ENCODE measurements at regions of chr6 and their contacts with region 1.

Region 1: DNA sequence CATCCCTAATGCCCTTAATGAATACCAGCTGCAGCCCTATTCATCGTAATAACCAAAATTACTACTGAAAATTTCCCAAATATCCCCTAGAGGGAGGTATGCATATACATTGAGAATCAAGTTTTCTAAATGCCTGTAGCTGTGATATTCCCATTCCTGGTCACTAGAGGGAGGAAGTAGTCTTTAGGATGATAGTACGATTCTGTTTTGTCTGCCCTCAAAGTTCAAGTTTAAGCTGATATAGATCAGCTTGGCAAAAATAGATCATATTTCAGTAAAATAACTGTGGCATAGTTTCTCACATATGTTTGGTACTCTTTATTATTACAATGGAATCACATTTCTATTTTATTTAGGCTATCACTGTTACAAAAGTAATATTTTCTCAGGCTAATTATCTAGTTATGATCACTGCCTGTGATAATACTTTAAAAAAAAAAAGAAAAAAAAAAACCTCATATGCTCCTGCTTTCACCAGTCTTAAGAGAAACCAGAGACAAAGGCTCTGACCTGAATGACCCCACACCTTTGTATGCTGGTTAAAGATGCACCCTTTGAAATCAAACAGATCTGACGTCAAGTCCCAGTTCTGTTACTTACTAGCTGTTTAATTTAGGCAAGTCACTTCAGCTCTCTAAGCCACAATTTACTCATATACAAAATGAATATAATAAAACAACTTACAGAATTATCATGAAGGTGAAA is 11.0 kb downstream of the TSPYL1 start:
- DNase-seq: no peak
- ATAC-seq: peak; percentile 81
- H3K4me3 Mint-ChIP-seq: no peak overlapping the region
- H3K27ac Mint-ChIP-seq: peak overlapping the region; percentile 61; the same call in 1 of the 2 replicates
- H3K4me1 Mint-ChIP-seq: peaks cover 30% of the 10 kb centered on the region
- H3K27me3 Mint-ChIP-seq: no peaks in the 10 kb centered on the region
- CTCF ChIP-seq: peak; percentile 76

Region 2: GRCh38 chr6:116229287-116229913 is 39.3 kb before region 1 on chr6:
- CTCF ChIA-PET with region 1: interaction called, 10 read pairs
- POLR2A ChIA-PET with region 1: no interaction called
- DNase-seq: peak; percentile 95
- ATAC-seq: peak; percentile 99
- H3K4me3 Mint-ChIP-seq: peak overlapping the region; percentile 57
- H3K27ac Mint-ChIP-seq: peak overlapping the region; percentile 95
- H3K4me1 Mint-ChIP-seq: peaks cover 10% of the 10 kb centered on the region
- H3K27me3 Mint-ChIP-seq: no peaks in the 10 kb centered on the region
- CTCF ChIP-seq: no peak

Region 3: DNA sequence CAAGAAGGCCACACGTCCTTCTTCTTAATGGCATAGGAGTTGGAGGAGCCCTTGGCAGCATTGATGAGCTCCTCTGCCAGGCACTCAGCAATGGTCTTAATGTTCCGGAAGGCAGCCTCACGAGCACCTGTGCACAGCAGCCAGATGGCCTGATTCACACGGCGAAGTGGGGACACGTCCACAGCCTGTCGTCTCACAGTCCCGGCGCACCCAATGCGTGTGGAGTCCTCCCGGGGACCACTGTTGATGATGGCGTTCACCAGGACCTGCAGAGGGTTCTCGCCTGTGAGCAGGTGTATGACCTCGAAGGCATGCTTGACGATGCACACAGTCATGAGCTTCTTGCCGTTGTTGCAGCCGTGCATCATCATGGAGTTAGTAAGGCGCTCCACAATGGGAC is 10.2 kb before region 1 on chr6:
- CTCF ChIA-PET with region 1: interaction called, 10 read pairs
- POLR2A ChIA-PET with region 1: interaction called, 4 read pairs
- DNase-seq: no peak
- ATAC-seq: no peak
- H3K4me3 Mint-ChIP-seq: no peak overlapping the region
- H3K27ac Mint-ChIP-seq: no peak overlapping the region
- H3K4me1 Mint-ChIP-seq: no peaks in the 10 kb centered on the region
- H3K27me3 Mint-ChIP-seq: peaks cover 5% of the 10 kb centered on the region; the same call in 1 of the 2 replicates
- CTCF ChIP-seq: no peak

Region 4: DNA sequence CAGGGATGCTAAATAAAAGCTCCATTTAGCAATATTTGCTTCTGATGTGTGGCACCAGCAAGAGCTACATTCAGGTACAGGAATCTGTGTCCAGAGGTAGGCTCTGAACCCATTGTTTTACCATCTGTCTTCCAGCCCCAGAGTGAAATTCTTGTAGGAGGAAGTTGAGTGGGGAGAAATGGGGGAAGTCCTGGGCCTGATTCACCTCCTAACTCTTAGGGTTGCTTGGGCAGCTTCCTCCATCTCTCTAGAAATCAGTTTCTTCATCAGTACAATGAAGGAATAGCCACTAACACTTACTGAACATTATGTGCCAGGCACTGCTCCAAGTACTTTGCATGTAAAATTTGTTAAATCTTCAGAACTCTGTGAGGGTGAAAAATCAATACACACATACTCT is 46.1 kb after region 1 on chr6:
- CTCF ChIA-PET with region 1: no interaction called
- POLR2A ChIA-PET with region 1: no interaction called
- DNase-seq: no peak
- ATAC-seq: 0 out of 2 replicates have a peak, but pooled peaks have one; percentile 28
- H3K4me3 Mint-ChIP-seq: no peak overlapping the region
- H3K27ac Mint-ChIP-seq: no peak overlapping the region
- H3K4me1 Mint-ChIP-seq: 0 out of 2 replicates have a peak, but pooled peaks cover 4% of the 10 kb centered on the region
- H3K27me3 Mint-ChIP-seq: no peaks in the 10 kb centered on the region
- CTCF ChIP-seq: no peak

Region 5: DNA sequence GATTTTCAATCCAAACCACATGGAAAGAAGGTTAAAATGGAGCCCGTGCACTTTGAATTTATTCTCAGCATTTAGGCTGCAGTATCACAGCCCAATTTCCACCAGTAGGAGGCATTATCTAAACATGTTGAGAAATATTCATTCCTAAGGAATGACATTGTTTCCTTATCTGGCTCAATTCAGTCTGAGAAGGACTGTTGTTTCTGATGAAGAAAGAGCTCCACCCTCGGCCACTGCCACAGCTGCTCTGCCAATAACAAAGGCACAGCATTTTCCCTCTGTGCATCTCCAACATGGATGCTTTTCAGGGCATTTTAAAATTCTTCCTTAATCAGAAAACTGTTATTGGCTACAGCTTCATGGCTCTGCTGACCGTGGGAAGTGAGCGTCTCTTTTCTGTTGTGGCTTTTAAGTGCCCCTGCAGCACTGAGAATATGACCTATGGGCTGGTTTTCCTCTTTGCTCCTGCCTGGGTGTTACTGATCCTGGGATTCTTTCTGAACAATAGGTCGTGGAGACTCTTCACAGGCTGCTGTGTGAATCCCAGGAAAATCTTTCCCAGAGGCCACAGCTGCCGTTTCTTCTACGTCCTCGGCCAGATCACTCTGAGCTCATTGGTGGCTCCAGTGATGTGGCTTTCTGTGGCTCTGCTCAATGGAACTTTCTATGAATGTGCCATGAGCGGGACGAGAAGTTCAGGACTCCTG is 242.8 kb after region 1 on chr6 and contains the start of gene CALHM5:
- CTCF ChIA-PET with region 1: interaction called, 14 read pairs
- POLR2A ChIA-PET with region 1: no interaction called
- DNase-seq: no peak
- ATAC-seq: peak; percentile 90
- H3K4me3 Mint-ChIP-seq: no peak within 1 kb of the TSS
- H3K27ac Mint-ChIP-seq: peak within 1 kb of the TSS; percentile 81
- H3K4me1 Mint-ChIP-seq: peaks cover 18% of the 10 kb centered on the region
- H3K27me3 Mint-ChIP-seq: no peaks in the 10 kb centered on the region
- CTCF ChIP-seq: peak; percentile 26; the same call in 1 of the 2 replicates
- total RNA-seq, gene CALHM5: 0.07 to 0.11 TPM (median 0.09 TPM) in 3 replicates

Region 6: GRCh38 chr6:116561377-116562018 is 292.8 kb after region 1 on chr6:
- CTCF ChIA-PET with region 1: interaction called, 44 read pairs
- POLR2A ChIA-PET with region 1: no interaction called
- DNase-seq: peak; percentile 77
- ATAC-seq: peak; percentile 80
- H3K4me3 Mint-ChIP-seq: peak overlapping the region; percentile 34
- H3K27ac Mint-ChIP-seq: 0 out of 2 replicates have a peak overlapping the region, but pooled peaks have one; percentile 20
- H3K4me1 Mint-ChIP-seq: peaks cover 4% of the 10 kb centered on the region
- H3K27me3 Mint-ChIP-seq: no peaks in the 10 kb centered on the region
- CTCF ChIP-seq: peak; percentile 83